HEK293 (cell line): ENCODE measurements at regions of chr19 and their contacts with region 1.

Region 1: DNA sequence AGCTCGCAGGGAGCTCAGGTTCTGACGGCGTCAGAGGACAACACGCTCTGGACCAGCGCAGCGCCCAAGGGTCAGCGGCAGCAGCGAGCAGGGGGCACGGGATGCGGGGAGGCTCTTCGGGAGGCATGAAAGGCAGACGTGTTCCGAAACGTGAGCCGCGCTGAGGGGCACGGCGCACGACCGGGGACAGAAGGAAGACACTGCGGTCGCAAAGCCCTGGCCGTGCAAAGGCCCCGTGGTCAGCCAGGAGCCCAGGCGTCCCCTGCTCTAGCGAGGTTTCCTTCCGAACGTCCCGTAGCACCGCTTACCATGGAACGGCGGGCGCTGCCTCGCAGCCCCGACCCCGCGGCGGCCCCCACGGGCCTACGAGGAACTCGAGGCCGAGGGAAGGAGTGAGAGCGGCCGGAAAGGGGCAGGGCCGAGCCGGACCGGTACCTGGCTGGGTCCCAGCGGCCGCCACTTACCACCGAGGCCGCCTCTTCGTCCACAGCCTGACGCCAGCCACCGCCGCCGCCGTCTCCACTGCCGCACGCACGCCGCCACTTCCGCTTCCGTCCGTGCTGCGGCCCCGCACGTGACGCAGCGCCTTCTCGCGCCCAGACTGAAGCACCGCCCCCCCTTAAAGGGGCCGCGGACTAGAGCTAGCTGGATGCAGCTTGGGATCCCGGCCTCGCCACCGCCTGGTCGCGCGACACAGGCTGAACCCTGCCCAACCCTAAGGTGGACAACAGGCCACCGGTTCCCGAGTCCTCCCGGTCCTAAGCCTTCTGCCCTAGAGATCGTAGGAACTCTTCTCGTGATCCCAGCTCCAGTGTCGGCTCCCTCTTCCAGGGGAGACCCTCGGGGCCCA is 9.4 kb downstream of the ABHD17A start:
- H3K4me3 ChIP-seq: peak overlapping the region; percentile 96
- H3K27ac ChIP-seq: peak overlapping the region; percentile 89
- H3K4me1 ChIP-seq: peaks cover 10% of the 10 kb centered on the region
- CTCF ChIP-seq: peak; percentile 88; the same call in 1 of the 2 replicates

Region 2: DNA sequence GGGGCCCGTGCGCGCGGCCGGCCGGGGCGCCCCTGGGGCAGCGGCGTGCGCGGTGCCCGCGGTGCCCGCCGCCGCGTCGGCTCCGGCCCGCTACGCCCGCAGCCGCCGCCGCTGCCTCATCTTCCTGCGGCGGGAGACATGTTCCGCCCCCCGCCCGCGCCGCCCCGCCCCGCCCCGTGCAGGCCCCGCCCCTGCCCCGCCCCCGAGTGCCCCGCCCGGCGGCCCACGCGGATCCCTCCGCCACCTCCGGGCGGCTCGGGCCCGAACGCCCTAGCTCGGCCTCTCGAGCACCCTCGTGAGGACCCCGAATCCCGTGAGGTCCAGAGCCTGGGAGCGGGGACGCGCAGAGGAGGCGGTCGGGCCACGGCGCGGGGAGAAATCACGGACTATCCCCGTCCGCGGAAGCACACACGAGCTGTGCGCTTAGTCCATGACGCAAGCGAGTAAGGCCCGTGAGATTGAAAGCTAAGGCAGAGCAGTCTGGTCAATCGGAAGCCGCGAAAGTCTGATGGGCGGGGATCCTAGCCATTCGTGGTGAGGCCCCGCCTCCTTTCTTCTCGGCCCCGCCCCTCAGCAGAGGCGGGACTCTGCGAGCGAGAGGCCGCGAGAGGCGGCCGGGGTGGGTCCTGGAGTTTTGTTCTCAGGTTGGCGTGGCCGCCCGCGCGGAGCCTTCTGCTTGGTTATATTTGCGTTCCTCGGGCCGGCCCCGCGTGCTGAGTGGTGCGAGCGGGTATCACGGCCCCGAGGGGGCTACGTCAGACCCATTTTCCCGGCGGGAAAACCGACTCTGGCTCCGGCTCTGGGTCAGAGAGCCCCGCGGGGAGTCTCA is 223.2 kb before region 1 on chr19 and contains the start of gene TCF3:
- CTCF ChIA-PET with region 1: no interaction called
- POLR2A ChIA-PET with region 1: no interaction called
- H3K4me3 ChIP-seq: peak within 1 kb of the TSS; percentile 69
- H3K27ac ChIP-seq: peak within 1 kb of the TSS; percentile 99
- H3K4me1 ChIP-seq: peaks cover 3% of the 10 kb centered on the region; the same call in 1 of the 2 replicates
- CTCF ChIP-seq: no peak

Region 3: DNA sequence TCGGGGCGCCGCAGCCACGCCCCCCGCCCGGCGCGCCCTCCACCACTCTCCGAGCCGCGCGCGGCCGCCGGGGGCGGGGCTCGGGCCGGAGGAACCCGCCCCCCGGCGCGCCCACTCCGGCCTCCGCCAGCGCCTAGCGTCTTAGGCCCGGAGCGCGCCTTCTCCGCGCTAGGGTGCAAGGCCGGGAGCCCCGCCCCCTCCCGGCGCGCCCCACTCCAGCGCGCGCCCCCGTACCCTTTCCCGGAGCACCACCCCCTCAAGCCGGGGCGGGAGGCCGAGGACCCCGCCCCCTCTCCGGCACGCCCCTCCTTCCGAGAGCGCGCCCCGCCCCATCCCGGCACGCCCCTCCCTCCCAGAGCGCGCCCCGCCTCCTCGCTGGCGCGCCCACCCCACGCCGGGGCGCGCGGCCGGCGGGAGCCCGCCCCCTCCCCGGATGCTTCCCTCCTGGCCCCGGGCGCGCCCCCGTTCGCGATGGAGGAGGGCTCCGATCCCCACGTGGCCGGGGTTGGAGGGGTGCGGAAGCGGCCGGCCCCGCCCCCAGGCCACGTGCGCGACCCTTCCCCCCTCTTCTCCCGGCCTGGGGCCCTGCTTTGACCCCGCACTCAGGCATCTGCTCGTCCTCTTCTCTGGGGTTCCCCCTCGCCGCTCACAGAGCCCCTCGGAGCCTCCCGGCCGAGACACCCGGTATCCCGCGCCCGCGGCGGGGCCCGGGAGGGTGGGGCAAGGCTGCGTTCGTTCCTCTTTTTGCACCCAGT is 12.0 kb before region 1 on chr19:
- CTCF ChIA-PET with region 1: interaction called, 4 read pairs
- POLR2A ChIA-PET with region 1: interaction called, 18 read pairs
- H3K4me3 ChIP-seq: peak overlapping the region; percentile 60
- H3K27ac ChIP-seq: peak overlapping the region; percentile 82
- H3K4me1 ChIP-seq: peaks cover 19% of the 10 kb centered on the region
- CTCF ChIP-seq: no peak

Region 4: DNA sequence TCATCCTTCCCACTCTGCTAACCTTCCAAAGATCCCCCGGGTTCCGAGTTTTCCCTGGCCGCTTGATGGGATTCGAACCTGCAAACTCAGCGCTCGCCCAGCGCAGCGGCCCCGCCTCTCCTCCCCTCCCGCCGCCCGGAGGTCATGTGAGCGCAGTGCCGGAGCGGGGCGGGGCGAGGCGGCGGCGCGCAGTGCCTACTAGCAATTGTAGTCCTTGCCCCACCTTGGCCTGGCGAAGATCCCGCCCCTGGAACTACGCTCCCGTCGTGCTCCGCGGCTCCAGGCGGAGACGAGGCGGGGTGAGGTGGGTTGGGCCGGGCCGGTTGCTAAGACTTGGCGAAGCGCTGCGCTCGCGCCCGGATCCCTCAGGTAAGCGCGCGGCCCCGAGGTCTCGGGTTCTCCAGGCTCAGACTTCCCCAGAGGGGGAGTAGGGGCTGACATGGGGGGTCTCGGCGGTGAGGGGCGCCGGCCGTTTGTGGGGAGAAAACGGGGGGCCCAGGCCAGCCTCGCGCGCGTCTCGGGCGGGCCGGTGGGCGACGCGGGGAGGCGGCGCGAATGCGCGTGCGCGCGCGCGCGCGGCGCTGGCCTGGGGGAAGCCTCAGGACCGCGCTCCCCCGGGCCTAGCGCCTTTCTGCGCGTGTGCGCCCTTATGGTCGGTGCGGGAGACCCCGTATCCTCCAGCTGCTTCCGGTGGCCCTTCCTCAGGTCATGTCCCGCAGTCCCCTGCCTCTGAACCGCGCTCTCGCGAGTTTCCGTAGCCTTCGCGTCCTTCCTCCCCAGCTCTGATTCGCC is 29.4 kb after region 1 on chr19 and contains the starts of genes ADAT3 and SCAMP4:
- CTCF ChIA-PET with region 1: interaction called, 3 read pairs
- POLR2A ChIA-PET with region 1: interaction called, 11 read pairs
- H3K4me3 ChIP-seq: peak within 1 kb of the TSS; percentile 81
- H3K27ac ChIP-seq: peak within 1 kb of the TSS; percentile 81
- H3K4me1 ChIP-seq: peaks cover 12% of the 10 kb centered on the region
- CTCF ChIP-seq: no peak